ENCODE measurements at regions of chr10 and their contacts with region 1.

Region 1: GRCh38 chr10:77943121-77943901 is 16.8 kb upstream of the DLG5 start:
- DNase-seq: peak; percentile 73
- H3K4me3 ChIP-seq: no peak overlapping the region
- CTCF ChIP-seq: no peak

Region 2: DNA sequence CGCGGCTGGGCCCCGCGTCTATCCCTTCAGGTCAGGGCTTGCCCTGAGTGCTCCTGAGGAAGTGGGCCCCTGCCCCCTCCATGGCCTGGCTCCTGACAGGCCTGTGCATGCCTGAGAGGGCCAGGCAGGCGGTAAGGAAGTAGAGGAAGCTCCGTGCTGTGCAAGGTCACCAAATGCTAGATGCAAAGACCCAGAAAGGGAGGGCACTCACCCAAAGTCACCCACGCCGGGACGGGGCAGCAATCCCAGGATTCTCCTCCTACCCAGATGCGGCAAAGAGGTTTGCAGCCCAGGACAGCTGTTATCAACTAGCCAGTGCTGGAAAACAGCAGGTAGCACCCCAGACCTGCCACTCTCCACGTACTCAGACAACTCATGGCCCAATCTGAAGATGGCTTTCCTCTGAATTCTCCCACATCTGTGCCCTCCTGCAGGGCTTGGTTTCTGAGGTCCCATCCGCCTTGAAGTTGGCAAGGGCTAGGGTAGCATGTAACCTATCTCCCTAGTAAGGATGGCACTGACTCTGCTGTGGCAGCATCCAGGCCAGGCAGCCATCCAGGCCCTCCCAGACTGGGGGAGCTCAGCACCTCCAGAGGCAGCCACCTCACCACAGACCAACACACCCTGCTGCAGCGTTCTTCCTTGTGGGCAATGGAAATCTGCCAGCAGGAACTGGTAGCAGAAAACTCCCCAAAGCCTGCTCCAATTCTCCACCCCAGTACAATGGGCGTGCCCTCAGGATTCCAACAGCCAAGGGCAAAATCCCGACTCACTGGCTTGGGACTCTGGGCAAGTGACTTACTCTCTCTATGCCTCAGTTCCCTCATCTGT is 44.4 kb before region 1 on chr10:
- in situ Hi-C with region 1: loop called (anchors 10 kb)
- DNase-seq: peak; percentile 53
- H3K4me3 ChIP-seq: no peak overlapping the region
- CTCF ChIP-seq: no peak

Region 3: GRCh38 chr10:78148961-78149610 is 205.8 kb after region 1 on chr10:
- in situ Hi-C with region 1: no loop called
- DNase-seq: no peak
- H3K4me3 ChIP-seq: no peak overlapping the region
- CTCF ChIP-seq: no peak